A673 (cell line): ENCODE measurements at regions of chr1 and their contacts with region 1.

Region 1: GRCh38 chr1:93078986-93079654 is at the start of gene MTF2:
- DNase-seq: peak; percentile 99
- H3K4me3 ChIP-seq: peak within 1 kb of the TSS; percentile 99
- H3K27ac ChIP-seq: peak within 1 kb of the TSS; percentile 97
- H3K4me1 ChIP-seq: peaks cover 19% of the 10 kb centered on the region
- H3K27me3 ChIP-seq: no peaks in the 10 kb centered on the region
- CTCF ChIP-seq: no peak
- total RNA-seq, gene MTF2: 68.5 and 68.7 TPM in 2 replicates

Region 2: DNA sequence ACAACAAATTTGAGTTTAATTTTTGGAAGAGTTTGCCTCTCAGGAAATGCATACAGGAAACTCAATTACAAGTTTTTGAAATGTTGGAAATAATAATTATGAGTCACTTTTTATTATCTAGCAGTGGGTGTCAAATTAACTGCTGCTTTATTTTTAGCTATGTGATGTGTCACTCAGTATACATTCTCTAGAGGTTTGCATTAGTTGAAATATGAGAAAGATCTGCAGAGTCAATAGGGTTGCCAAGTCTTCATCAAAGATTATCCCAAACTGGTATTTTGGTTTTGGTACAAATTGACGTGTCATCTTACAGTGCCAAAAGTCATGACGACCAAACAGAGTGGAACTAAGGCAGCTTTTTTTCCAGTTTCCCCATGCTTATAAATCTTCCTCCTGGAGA is 63.5 kb before region 1 on chr1:
- CTCF ChIA-PET with region 1: no interaction called
- POLR2A ChIA-PET with region 1: no interaction called
- intact Hi-C with region 1: loop called (anchors 2 kb)
- DNase-seq: peak; percentile 89
- H3K4me3 ChIP-seq: peak overlapping the region; percentile 3
- H3K27ac ChIP-seq: peak overlapping the region; percentile 82
- H3K4me1 ChIP-seq: peaks cover 56% of the 10 kb centered on the region
- H3K27me3 ChIP-seq: no peaks in the 10 kb centered on the region
- CTCF ChIP-seq: no peak

Region 3: GRCh38 chr1:93179886-93180722 is 101.0 kb after region 1 on chr1 and contains the start of gene TMED5:
- CTCF ChIA-PET with region 1: no interaction called
- POLR2A ChIA-PET with region 1: interaction called, 4 read pairs
- intact Hi-C with region 1: loop called (anchors 2 kb)
- DNase-seq: peak; percentile 99
- H3K4me3 ChIP-seq: peak within 1 kb of the TSS; percentile 76
- H3K27ac ChIP-seq: peak within 1 kb of the TSS; percentile 93
- H3K4me1 ChIP-seq: peaks cover 33% of the 10 kb centered on the region
- H3K27me3 ChIP-seq: no peaks in the 10 kb centered on the region
- CTCF ChIP-seq: peak; percentile 14; the same call in 1 of the 2 replicates
- total RNA-seq, gene TMED5: 45.5 and 52.6 TPM in 2 replicates